HAP-1 (cell line): ENCODE measurements at regions of chr12 and their contacts with region 1.

Region 1: GRCh38 chr12:67355578-67356379 is 86.6 kb downstream of the CAND1 start:
- DNase-seq: peak; percentile 23 to 59
- H3K4me3 ChIP-seq: no peak overlapping the region
- H3K4me1 ChIP-seq: peaks cover 3% of the 10 kb centered on the region; the same call in 1 of the 2 replicates
- H3K27me3 ChIP-seq: no peaks in the 10 kb centered on the region

Region 2: DNA sequence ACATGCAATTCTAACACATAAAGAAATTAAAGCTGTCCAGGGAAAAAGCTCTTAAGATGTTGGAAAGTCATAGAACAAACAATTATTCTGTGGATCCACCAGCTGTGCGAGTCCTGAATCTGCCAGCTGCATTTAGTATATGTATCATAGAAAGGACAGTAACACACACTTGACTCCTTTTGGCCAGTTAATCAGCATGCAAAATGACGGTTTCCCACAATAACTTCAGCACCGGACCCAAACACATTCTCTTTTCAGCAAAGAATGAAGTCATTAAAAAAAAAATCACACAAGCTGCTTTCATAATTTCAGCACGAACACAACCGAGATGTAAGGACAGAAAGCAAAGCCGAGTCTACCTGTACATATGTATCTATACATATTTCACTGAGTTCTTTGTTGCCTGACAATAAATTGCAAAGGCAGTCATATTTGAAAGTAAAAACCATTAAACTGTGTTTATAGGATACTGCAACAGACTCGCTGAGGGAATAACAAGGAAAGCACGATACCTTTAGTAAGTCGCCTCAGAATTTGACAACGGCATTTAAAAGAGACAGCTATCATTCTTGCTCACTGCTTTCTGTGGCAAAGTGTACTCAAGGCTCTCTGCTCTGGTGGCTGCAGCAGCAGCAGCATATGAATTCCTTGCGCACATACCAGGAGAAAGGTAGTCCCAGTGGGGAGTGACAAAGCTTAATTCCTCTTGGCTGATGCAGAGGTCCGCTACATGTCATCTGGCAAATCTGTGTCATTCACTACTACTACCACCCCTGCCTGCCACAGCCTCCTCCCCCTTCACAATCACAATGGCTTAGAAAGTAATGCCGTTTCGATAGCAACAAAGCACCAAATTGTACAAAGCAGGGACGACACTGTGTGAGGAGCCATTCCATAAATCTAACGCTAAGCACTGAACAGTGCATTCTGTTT is 677.2 kb before region 1 on chr12 and contains the start of gene GRIP1:
- in situ Hi-C with region 1: no loop called
- DNase-seq: peak in 1 of 2 experiments; percentile 8
- H3K4me3 ChIP-seq: no peak within 1 kb of the TSS
- H3K4me1 ChIP-seq: no peaks in the 10 kb centered on the region
- H3K27me3 ChIP-seq: no peaks in the 10 kb centered on the region

Region 3: DNA sequence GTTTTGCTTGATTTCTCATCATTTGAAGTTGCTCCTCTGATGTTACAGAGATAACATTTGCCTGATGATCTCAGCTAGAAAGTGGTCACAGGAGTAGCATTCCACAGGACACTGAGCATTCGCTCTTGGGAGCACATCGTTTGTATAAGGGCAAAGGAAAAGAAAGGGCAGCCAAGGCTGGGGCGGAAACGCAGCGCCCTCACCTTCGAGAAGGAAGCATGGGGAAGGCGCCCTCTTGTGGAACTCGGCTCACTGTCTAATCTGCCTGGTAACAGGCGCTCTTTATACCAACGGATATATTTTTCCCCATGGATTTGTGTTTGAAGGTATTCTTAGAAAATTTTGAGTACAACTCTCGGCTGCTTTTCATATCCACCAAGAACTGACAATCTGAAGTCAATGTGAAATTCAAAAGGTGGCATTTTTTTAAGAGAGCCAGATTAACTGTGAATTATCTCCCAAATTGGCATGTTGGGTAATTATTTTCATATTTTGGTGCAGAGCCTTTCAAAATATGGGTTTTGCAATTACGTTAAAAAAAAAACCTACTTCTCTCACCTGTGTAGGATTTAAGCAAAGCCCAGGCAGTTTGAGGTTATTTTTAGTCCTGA is 86.1 kb after region 1 on chr12:
- in situ Hi-C with region 1: loop called (anchors 10 kb)
- DNase-seq: peak; percentile 58 to 91
- H3K4me3 ChIP-seq: no peak overlapping the region
- H3K4me1 ChIP-seq: no peaks in the 10 kb centered on the region; the same call in none of the 2 replicates
- H3K27me3 ChIP-seq: no peaks in the 10 kb centered on the region

Region 4: DNA sequence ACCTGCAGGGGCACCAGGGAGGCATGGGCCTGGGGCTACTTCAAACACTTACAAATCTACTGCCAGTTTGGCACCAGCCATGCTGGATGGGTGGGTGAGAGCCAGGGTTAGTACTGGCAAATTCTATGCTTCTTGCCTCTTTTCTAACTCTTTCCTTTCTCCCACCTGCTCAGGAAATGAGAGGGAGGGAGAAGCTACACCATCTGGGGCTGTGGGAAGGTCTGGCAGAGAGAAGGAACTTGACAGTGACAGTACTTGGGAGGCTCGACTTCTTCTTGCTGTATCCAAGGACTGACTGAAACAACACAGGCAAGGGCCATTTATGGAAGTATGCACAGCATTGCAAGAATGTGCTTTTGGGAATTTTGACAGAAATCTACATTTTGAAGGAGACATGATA is 143.2 kb after region 1 on chr12:
- in situ Hi-C with region 1: no loop called
- DNase-seq: no peak
- H3K4me3 ChIP-seq: no peak overlapping the region
- H3K4me1 ChIP-seq: no peaks in the 10 kb centered on the region
- H3K27me3 ChIP-seq: no peaks in the 10 kb centered on the region

Region 5: GRCh38 chr12:67943226-67943892 is 587.6 kb after region 1 on chr12:
- in situ Hi-C with region 1: loop called (anchors 25 kb)
- DNase-seq: peak; percentile 63 to 76
- H3K4me3 ChIP-seq: no peak overlapping the region
- H3K4me1 ChIP-seq: no peaks in the 10 kb centered on the region
- H3K27me3 ChIP-seq: peaks cover 23% of the 10 kb centered on the region